ENCODE measurements at regions of chr1 and their contacts with region 1.

Region 1: GRCh38 chr1:167059045-167059808 is 30.9 kb downstream of the GPA33 start:
- DNase-seq: peak; percentile 81
- ATAC-seq: peak; percentile 50
- H3K4me3 Mint-ChIP-seq: no peak overlapping the region
- H3K27ac Mint-ChIP-seq: peak overlapping the region; percentile 21
- H3K4me1 Mint-ChIP-seq: peaks cover 12% of the 10 kb centered on the region
- H3K27me3 Mint-ChIP-seq: peaks cover 3% of the 10 kb centered on the region

Region 2: GRCh38 chr1:166869318-166870099 is 189.7 kb before region 1 on chr1:
- CTCF ChIA-PET with region 1: interaction called, 12 read pairs
- POLR2A ChIA-PET with region 1: no interaction called
- DNase-seq: no peak
- ATAC-seq: no peak
- H3K4me3 Mint-ChIP-seq: no peak overlapping the region
- H3K27ac Mint-ChIP-seq: no peak overlapping the region
- H3K4me1 Mint-ChIP-seq: peaks cover 45% of the 10 kb centered on the region
- H3K27me3 Mint-ChIP-seq: no peaks in the 10 kb centered on the region

Region 3: DNA sequence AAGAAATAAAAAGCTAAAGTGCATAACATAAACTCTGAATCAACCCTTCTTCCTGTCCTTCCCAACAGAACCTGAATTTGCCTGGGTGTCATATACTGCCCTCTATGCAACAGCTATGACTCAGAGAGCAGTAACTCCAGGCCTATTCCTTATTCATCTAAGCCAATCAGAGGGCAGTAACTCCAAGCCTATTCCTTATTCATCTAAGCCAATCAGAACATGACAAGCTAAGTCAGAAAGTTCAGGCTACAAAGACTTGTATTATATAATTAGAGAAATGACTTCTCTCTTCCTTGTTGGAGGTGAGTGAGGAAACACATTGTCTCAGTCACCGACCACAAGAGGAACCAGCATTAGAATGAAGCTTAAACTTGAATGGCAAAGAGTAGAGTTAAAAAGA is 157.0 kb before region 1 on chr1:
- CTCF ChIA-PET with region 1: interaction called, 838 read pairs
- POLR2A ChIA-PET with region 1: no interaction called
- DNase-seq: no peak
- ATAC-seq: no peak
- H3K4me3 Mint-ChIP-seq: no peak overlapping the region
- H3K27ac Mint-ChIP-seq: no peak overlapping the region
- H3K4me1 Mint-ChIP-seq: peaks cover 48% of the 10 kb centered on the region
- H3K27me3 Mint-ChIP-seq: peaks cover 28% of the 10 kb centered on the region

Region 4: DNA sequence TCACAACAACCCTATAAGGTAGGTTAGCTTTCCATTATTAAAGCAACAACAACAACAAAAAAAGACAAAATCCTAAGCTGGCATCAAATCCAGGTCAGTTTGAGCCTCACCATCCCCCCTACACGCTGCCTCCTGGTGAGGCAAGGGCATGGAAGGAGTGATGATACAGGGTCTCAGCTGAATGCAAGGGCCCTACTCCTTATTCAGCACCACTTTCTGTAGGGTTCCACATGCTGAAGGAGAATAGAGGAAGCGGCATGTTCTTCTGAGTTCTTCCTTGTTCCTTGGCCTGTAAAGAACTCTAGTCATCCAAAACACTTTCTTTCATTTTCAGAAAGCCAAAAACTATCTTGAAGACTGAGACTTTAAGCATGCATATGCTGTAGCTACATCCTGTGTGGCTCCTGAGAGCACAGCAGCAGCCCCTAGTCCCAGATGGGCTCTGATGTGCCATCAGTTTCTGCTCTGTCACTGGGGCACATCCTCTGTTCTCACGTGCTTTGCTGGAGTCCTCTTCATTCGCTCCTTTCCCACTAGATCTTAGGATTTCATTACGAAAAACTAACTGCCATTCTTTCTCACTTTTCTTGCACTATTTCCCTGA is 90.1 kb before region 1 on chr1:
- CTCF ChIA-PET with region 1: interaction called, 12 read pairs
- POLR2A ChIA-PET with region 1: interaction called, 3 read pairs
- DNase-seq: peak; percentile 49
- ATAC-seq: peak; percentile 82
- H3K4me3 Mint-ChIP-seq: no peak overlapping the region
- H3K27ac Mint-ChIP-seq: peak overlapping the region; percentile 10
- H3K4me1 Mint-ChIP-seq: peaks cover 27% of the 10 kb centered on the region
- H3K27me3 Mint-ChIP-seq: peaks cover 35% of the 10 kb centered on the region

Region 5: GRCh38 chr1:167043752-167044488 is 15.3 kb before region 1 on chr1:
- CTCF ChIA-PET with region 1: interaction called, 46 read pairs
- POLR2A ChIA-PET with region 1: interaction called, 9 read pairs
- DNase-seq: peak; percentile 88
- ATAC-seq: peak; percentile 100
- H3K4me3 Mint-ChIP-seq: peak overlapping the region; percentile 78
- H3K27ac Mint-ChIP-seq: peak overlapping the region; percentile 83
- H3K4me1 Mint-ChIP-seq: peaks cover 18% of the 10 kb centered on the region
- H3K27me3 Mint-ChIP-seq: peaks cover 18% of the 10 kb centered on the region

Region 6: GRCh38 chr1:167121375-167122120 is 62.3 kb after region 1 on chr1:
- CTCF ChIA-PET with region 1: interaction called, 57 read pairs
- POLR2A ChIA-PET with region 1: no interaction called
- DNase-seq: peak; percentile 33
- ATAC-seq: peak; percentile 88
- H3K4me3 Mint-ChIP-seq: peak overlapping the region; percentile 74
- H3K27ac Mint-ChIP-seq: no peak overlapping the region
- H3K4me1 Mint-ChIP-seq: peaks cover 9% of the 10 kb centered on the region
- H3K27me3 Mint-ChIP-seq: peaks cover 7% of the 10 kb centered on the region

Region 7: DNA sequence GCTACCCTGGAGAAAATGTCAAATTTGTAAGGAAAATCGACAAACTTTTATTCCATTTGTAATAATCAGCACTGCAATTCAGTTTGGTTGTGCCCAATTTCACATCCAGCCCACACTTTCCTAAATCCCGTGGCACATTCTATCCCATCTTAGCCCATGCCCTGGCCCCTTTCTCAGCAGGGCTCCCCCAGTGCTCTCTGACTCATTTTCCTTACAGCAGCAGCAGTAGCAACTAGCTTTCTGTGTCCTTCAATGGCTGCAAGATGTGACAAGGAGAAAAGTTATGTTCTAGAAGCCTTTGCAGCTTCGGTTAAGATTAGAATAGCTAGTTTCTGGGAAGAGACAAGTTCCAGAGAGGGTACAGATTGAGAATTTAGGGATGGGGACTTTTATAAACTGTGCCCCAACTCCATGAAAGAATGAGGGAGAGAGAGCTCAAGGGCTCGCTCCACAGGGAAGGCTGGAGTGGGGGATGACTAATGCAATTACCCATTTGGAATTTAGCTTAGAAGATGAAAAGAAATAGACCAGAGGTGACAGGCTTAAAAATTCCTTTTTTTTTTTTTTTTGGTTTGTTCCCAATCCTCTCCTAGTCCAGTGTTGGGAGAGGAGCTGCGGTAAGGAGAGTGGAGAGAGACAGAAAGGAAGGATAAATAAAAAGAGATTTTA is 114.4 kb after region 1 on chr1:
- CTCF ChIA-PET with region 1: no interaction called
- POLR2A ChIA-PET with region 1: no interaction called
- DNase-seq: no peak
- ATAC-seq: no peak
- H3K4me3 Mint-ChIP-seq: no peak overlapping the region
- H3K27ac Mint-ChIP-seq: no peak overlapping the region
- H3K4me1 Mint-ChIP-seq: no peaks in the 10 kb centered on the region
- H3K27me3 Mint-ChIP-seq: peaks cover 9% of the 10 kb centered on the region

Measured in activated CD8-positive, alpha-beta T cell treated with anti-CD3 and anti-CD28 coated beads, Interleukin-2, amount 10 ng/mL, durations not matched to agents 7 days and 5 days (primary cell).